PC-9 (cell line): ENCODE measurements at regions of chr5 and their contacts with region 1.

Region 1: GRCh38 chr5:151596828-151597539 is 5.9 kb upstream of the FAT2 start:
- DNase-seq: peak; percentile 42 to 61
- H3K4me3 ChIP-seq: no peak overlapping the region
- H3K27ac ChIP-seq: 0 out of 2 replicates have a peak overlapping the region, but pooled peaks have one; percentile 11
- H3K4me1 ChIP-seq: peaks cover 39% of the 10 kb centered on the region
- H3K27me3 ChIP-seq: no peaks in the 10 kb centered on the region
- CTCF ChIP-seq: no peak

Region 2: DNA sequence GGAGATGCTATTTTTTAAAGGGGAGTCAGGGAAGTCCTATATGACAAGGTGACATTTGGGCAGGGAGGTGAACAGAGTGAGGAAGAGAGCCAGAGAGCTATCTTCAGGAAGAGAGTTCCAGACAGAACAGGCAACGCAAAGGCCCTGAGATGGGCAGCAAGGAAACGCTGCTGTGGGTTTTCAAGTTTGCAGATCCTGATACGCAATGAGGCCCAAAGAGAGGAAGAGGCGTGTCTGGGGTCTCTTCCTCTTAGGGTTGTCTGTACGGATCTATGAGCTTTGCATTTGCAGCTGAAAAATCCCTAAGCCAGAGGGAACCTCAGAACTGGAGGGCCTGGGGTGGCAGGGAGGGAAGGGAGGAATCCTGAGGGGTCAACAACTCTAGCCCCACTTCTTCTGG is 19.4 kb before region 1 on chr5:
- CTCF ChIA-PET with region 1: no interaction called
- POLR2A ChIA-PET with region 1: no interaction called
- intact Hi-C with region 1: loop called (anchors 1 kb)
- DNase-seq: no peak
- H3K4me3 ChIP-seq: no peak overlapping the region
- H3K27ac ChIP-seq: no peak overlapping the region
- H3K4me1 ChIP-seq: no peaks in the 10 kb centered on the region
- H3K27me3 ChIP-seq: no peaks in the 10 kb centered on the region; the same call in 1 of the 2 replicates
- CTCF ChIP-seq: no peak